ENCODE measurements at regions of chr5 and their contacts with region 1.

Region 1: DNA sequence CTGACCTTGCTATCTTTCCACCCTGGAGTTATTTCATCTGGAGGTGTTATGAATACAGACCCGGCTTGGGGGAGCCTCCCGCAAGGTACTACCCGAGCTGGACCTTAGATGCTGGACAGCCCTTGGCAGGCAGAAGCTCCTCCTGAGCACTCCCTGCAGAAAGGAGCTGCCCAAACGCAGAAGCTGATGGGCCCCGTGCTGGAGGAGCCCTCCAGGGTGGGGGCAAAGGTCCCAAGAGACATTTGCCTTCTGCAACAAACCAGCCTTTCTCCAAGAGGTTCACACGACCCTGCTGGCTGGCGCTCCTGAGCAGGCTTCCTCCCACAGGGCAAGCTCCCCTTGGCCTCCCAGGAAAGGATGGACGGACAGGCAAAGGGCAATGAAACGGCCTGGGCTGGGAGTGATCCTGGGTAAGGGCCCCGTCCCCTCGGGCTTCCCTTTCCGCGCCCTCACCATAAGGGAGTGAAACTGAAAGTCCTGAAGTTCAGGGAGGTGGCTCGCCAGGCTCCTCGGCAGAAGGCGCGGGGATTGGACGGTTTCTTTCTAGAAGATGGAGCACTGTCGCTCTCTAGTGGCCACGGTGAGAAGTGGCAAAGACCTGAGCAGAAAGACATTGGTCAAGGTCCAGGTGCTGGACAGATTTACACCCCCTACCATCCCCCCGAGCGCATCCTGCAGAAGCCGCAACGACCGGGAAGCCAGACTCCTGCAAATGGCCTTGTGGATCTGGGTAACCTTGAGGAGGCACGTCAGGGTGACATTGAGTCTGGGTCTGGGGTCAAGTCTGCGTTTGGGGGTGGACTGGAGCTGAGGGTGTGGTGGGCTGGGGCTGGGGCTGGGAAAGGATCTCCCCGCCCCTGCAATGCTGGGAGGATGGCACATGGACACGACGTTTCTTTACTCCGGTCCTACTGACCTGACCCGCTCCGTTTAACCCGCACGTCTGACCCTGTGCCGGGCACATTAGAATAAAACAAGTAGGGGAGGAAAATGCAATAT is 56.4 kb downstream of the NEURL1B start:
- DNase-seq: peak; percentile 74 to 92 (median 81)
- ATAC-seq: peak; percentile 97
- H3K4me3 ChIP-seq: peak overlapping the region; percentile 89
- H3K4me3 Mint-ChIP-seq: peak overlapping the region; percentile 91
- H3K27ac ChIP-seq: peak overlapping the region in 1 of 2 donors; percentile 75
- H3K27ac Mint-ChIP-seq: peak overlapping the region; percentile 72
- H3K4me1 ChIP-seq: peaks cover 24% of the 10 kb centered on the region
- H3K4me1 Mint-ChIP-seq: peaks cover 24% of the 10 kb centered on the region
- H3K27me3 ChIP-seq: peaks cover 9 to 10% of the 10 kb centered on the region in 2 experiments
- H3K27me3 Mint-ChIP-seq: peaks cover 17% of the 10 kb centered on the region
- CTCF ChIP-seq: peak; percentile 85

Region 2: GRCh38 chr5:171418316-171418981 is 1279.0 kb before region 1 on chr5:
- CTCF ChIA-PET with region 1: no interaction called
- POLR2A ChIA-PET with region 1: no interaction called
- intact Hi-C with region 1: loop called in 1 of 2 experiments (anchors 5 kb)
- DNase-seq: peak in 12 of 14 experiments; percentile 15 to 67 (median 35)
- ATAC-seq: peak; percentile 54
- H3K4me3 ChIP-seq: peak overlapping the region; percentile 43
- H3K4me3 Mint-ChIP-seq: peak overlapping the region; percentile 80
- H3K27ac ChIP-seq: no peak overlapping the region
- H3K27ac Mint-ChIP-seq: no peak overlapping the region
- H3K4me1 ChIP-seq: peaks cover 22% of the 10 kb centered on the region
- H3K4me1 Mint-ChIP-seq: peaks cover 17% of the 10 kb centered on the region
- H3K27me3 ChIP-seq: peaks cover 16 to 24% of the 10 kb centered on the region in 2 experiments
- H3K27me3 Mint-ChIP-seq: peaks cover 30% of the 10 kb centered on the region
- CTCF ChIP-seq: peak; percentile 68

Region 3: GRCh38 chr5:172479044-172479783 is 218.2 kb before region 1 on chr5:
- CTCF ChIA-PET with region 1: no interaction called
- POLR2A ChIA-PET with region 1: no interaction called
- intact Hi-C with region 1: loop called (anchors 1 kb)
- DNase-seq: peak; percentile 12 to 81 (median 45)
- ATAC-seq: peak; percentile 79
- H3K4me3 ChIP-seq: no peak overlapping the region
- H3K4me3 Mint-ChIP-seq: no peak overlapping the region
- H3K27ac ChIP-seq: no peak overlapping the region
- H3K27ac Mint-ChIP-seq: no peak overlapping the region
- H3K4me1 ChIP-seq: no peaks in the 10 kb centered on the region
- H3K4me1 Mint-ChIP-seq: no peaks in the 10 kb centered on the region
- H3K27me3 ChIP-seq: no peaks in the 10 kb centered on the region
- H3K27me3 Mint-ChIP-seq: peaks cover 6% of the 10 kb centered on the region
- CTCF ChIP-seq: peak; percentile 55

Region 4: GRCh38 chr5:172616730-172617129 is 80.7 kb before region 1 on chr5:
- CTCF ChIA-PET with region 1: no interaction called
- POLR2A ChIA-PET with region 1: no interaction called
- intact Hi-C with region 1: no loop called
- DNase-seq: no peak
- ATAC-seq: no peak
- H3K4me3 ChIP-seq: no peak overlapping the region
- H3K4me3 Mint-ChIP-seq: no peak overlapping the region
- H3K27ac ChIP-seq: no peak overlapping the region
- H3K27ac Mint-ChIP-seq: no peak overlapping the region
- H3K4me1 ChIP-seq: no peaks in the 10 kb centered on the region
- H3K4me1 Mint-ChIP-seq: no peaks in the 10 kb centered on the region
- H3K27me3 ChIP-seq: no peaks in the 10 kb centered on the region
- H3K27me3 Mint-ChIP-seq: no peaks in the 10 kb centered on the region
- CTCF ChIP-seq: no peak

Region 5: DNA sequence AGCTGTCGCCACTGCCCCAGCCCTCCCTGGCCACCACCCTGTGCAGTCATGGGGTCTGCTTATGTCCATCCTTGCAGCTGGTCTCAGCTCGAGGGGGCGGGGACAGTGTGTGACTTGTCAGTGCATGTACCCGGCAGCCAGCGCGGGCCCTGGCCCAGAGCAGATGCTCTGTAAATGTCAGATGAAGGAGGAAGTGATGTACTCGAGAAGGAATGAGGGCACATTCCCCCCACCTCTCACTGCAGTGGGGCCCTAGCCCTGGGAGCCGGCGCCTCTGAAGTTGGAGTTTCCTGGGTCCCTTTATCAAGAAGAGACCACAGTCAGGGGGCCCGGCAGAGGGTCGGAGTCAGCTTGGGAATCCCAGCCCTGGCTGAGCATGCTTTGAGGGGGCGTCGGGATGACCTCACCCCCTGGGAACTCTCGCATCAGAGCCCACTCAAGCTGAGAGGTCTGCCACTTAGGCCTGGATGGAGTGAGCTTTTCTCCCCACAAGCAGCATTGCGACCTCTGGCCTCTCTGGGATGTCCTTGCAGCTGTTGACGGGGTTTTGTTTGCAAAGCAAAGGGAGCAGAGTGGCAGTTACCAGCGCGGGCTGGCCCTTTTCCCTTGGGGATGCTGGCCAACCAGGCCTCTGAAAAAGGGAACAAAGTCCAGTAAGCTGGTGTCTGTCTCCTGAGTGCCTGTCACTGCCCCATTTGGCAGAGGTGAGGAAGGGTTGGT is 37.4 kb before region 1 on chr5:
- CTCF ChIA-PET with region 1: no interaction called
- POLR2A ChIA-PET with region 1: no interaction called
- intact Hi-C with region 1: no loop called
- DNase-seq: peak in 1 of 14 experiments; percentile 28
- ATAC-seq: no peak
- H3K4me3 ChIP-seq: no peak overlapping the region
- H3K4me3 Mint-ChIP-seq: no peak overlapping the region
- H3K27ac ChIP-seq: no peak overlapping the region
- H3K27ac Mint-ChIP-seq: no peak overlapping the region
- H3K4me1 ChIP-seq: no peaks in the 10 kb centered on the region
- H3K4me1 Mint-ChIP-seq: no peaks in the 10 kb centered on the region
- H3K27me3 ChIP-seq: no peaks in the 10 kb centered on the region
- H3K27me3 Mint-ChIP-seq: no peaks in the 10 kb centered on the region
- CTCF ChIP-seq: no peak

Region 6: GRCh38 chr5:173378727-173379126 is 681.3 kb after region 1 on chr5:
- CTCF ChIA-PET with region 1: no interaction called
- POLR2A ChIA-PET with region 1: no interaction called
- intact Hi-C with region 1: no loop called
- DNase-seq: no peak
- ATAC-seq: no peak
- H3K4me3 ChIP-seq: no peak overlapping the region
- H3K4me3 Mint-ChIP-seq: no peak overlapping the region
- H3K27ac ChIP-seq: no peak overlapping the region
- H3K27ac Mint-ChIP-seq: no peak overlapping the region
- H3K4me1 ChIP-seq: no peaks in the 10 kb centered on the region
- H3K4me1 Mint-ChIP-seq: no peaks in the 10 kb centered on the region
- H3K27me3 ChIP-seq: peaks cover 0 to 3% of the 10 kb centered on the region in 2 experiments
- H3K27me3 Mint-ChIP-seq: peaks cover 30% of the 10 kb centered on the region
- CTCF ChIP-seq: no peak

Measured in CD4-positive, alpha-beta T cell (primary cell).